MCF 10A (cell line): ENCODE measurements at regions of chr5 and their contacts with region 1.

Region 1: DNA sequence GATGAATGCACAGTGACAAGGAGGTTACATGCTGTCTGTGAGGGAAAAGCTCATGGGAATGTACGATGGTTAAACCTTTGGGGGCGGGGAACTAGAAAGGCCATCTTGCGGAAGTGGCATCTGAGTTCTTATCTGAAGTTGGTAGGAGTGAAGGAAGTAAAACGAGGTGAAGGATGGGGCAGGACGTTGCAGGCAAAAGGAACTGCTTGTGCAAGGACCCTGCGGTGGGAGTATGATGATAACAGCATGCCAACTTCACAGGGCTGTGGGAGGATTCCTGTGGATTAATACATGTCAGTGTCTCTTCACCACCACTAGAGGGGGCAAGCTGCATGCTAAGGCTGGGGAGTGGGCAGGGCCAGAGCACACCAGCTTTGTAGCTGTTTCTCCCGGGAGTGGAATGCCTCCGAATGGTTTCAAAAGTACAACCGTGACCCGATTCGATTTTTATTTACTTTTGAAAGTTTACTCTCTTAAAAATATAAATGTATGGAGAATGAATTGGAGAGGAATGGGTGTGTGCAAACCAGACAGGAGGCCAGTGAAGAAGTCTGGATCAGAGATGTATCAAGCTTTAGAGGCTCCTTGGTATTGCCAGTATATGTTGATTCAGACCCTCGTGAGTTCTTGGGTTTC is 62.5 kb downstream of the CYFIP2 start:
- DNase-seq: peak; percentile 90
- H3K4me3 Mint-ChIP-seq: no peak overlapping the region
- H3K27ac Mint-ChIP-seq: no peak overlapping the region
- H3K4me1 Mint-ChIP-seq: no peaks in the 10 kb centered on the region
- H3K27me3 Mint-ChIP-seq: no peaks in the 10 kb centered on the region
- CTCF ChIP-seq: peak; percentile 97

Region 2: DNA sequence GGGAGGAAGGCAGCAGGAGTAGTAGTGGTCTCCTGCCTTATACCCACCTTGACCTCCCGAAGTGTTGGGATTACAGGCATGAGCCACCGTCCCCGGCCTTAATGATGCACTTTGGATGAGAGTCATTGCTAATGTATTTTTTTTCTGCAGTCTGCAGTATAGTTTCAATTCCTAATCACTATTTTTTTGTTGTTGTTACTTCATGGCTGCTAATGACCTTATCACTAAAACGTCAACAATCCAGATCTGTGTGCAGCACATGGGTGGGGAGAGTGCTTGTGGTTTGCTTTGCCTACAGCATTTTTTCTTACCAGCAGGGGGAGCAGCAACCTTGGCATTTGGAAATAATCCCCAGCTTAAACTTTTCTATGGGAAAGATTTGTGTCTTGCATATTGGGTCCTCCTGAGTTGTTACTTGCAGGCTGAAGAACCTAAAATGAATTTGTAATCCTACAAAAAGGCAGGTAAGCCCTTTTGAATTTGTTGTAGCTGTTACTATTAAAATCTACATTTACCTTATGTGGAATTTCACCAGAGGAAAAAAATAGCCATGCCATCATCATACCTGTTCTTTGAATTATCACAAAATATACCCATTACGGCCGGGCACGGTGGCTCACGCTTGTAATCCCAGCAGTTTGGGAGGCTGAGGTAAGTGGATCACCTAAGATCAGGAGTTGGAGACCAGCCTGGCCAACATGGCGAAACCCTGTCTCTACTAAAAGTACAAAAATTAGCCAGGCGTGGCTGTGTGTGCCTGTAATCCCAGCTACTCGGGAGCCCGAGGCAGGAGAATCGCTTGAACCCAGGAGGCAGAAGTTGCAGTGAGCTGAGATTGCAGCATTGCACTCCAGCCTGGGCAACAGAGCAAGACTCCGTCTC is 179.4 kb before region 1 on chr5:
- CTCF ChIA-PET with region 1: interaction called, 12 read pairs
- POLR2A ChIA-PET with region 1: no interaction called
- intact Hi-C with region 1: no loop called
- DNase-seq: peak; percentile 81
- H3K4me3 Mint-ChIP-seq: no peak overlapping the region
- H3K27ac Mint-ChIP-seq: no peak overlapping the region
- H3K4me1 Mint-ChIP-seq: peaks cover 6% of the 10 kb centered on the region
- H3K27me3 Mint-ChIP-seq: no peaks in the 10 kb centered on the region
- CTCF ChIP-seq: peak; percentile 90

Region 3: GRCh38 chr5:157225469-157226422 is 102.6 kb before region 1 on chr5:
- CTCF ChIA-PET with region 1: no interaction called
- POLR2A ChIA-PET with region 1: no interaction called
- intact Hi-C with region 1: no loop called
- DNase-seq: no peak
- H3K4me3 Mint-ChIP-seq: no peak overlapping the region
- H3K27ac Mint-ChIP-seq: no peak overlapping the region
- H3K4me1 Mint-ChIP-seq: no peaks in the 10 kb centered on the region
- H3K27me3 Mint-ChIP-seq: no peaks in the 10 kb centered on the region
- CTCF ChIP-seq: no peak

Region 4: GRCh38 chr5:157253547-157253946 is 74.8 kb before region 1 on chr5:
- CTCF ChIA-PET with region 1: interaction called, 57 read pairs
- POLR2A ChIA-PET with region 1: interaction called, 3 read pairs
- intact Hi-C with region 1: no loop called
- DNase-seq: peak; percentile 79
- H3K4me3 Mint-ChIP-seq: no peak overlapping the region
- H3K27ac Mint-ChIP-seq: no peak overlapping the region
- H3K4me1 Mint-ChIP-seq: no peaks in the 10 kb centered on the region
- H3K27me3 Mint-ChIP-seq: no peaks in the 10 kb centered on the region
- CTCF ChIP-seq: peak; percentile 96

Region 5: GRCh38 chr5:157312492-157312891 is 15.9 kb before region 1 on chr5:
- CTCF ChIA-PET with region 1: interaction called, 97 read pairs
- POLR2A ChIA-PET with region 1: interaction called, 3 read pairs
- intact Hi-C with region 1: no loop called
- DNase-seq: peak; percentile 67
- H3K4me3 Mint-ChIP-seq: no peak overlapping the region
- H3K27ac Mint-ChIP-seq: no peak overlapping the region
- H3K4me1 Mint-ChIP-seq: no peaks in the 10 kb centered on the region
- H3K27me3 Mint-ChIP-seq: no peaks in the 10 kb centered on the region
- CTCF ChIP-seq: peak; percentile 82

Region 6: DNA sequence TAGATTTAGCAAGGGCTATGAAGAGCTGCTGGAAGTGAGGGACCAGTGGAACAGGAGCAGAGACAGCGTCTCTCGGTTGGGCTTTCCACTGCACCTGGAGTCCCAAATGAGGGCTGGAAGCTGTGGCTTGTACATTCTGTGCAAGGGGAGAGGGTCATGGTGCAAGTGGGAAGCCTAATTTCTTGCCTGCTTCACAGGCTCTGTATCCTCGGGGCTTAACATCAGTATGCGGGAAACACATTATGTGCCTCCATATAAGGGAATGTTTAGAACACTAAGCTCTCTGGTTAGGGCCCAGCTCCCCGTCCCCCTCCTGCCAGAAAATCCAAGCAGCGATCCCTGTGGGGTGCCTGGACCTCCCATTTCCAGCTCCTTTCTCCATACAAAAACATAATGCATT is 42.6 kb after region 1 on chr5:
- CTCF ChIA-PET with region 1: interaction called, 11 read pairs
- POLR2A ChIA-PET with region 1: no interaction called
- intact Hi-C with region 1: no loop called
- DNase-seq: no peak
- H3K4me3 Mint-ChIP-seq: no peak overlapping the region
- H3K27ac Mint-ChIP-seq: no peak overlapping the region
- H3K4me1 Mint-ChIP-seq: no peaks in the 10 kb centered on the region
- H3K27me3 Mint-ChIP-seq: no peaks in the 10 kb centered on the region
- CTCF ChIP-seq: no peak

Region 7: GRCh38 chr5:157476702-157477408 is 148.5 kb after region 1 on chr5:
- CTCF ChIA-PET with region 1: interaction called, 178 read pairs
- POLR2A ChIA-PET with region 1: interaction called, 4 read pairs
- intact Hi-C with region 1: loop called (anchors 1 kb)
- DNase-seq: peak; percentile 93
- H3K4me3 Mint-ChIP-seq: no peak overlapping the region
- H3K27ac Mint-ChIP-seq: no peak overlapping the region
- H3K4me1 Mint-ChIP-seq: no peaks in the 10 kb centered on the region
- H3K27me3 Mint-ChIP-seq: no peaks in the 10 kb centered on the region
- CTCF ChIP-seq: peak; percentile 97

Region 8: GRCh38 chr5:157731272-157732129 is 403.1 kb after region 1 on chr5 and contains the start of gene THG1L:
- CTCF ChIA-PET with region 1: interaction called, 7 read pairs
- POLR2A ChIA-PET with region 1: no interaction called
- intact Hi-C with region 1: loop called (anchors 1 kb)
- DNase-seq: peak; percentile 100
- H3K4me3 Mint-ChIP-seq: peak within 1 kb of the TSS; percentile 97
- H3K27ac Mint-ChIP-seq: peak within 1 kb of the TSS; percentile 98
- H3K4me1 Mint-ChIP-seq: peaks cover 14% of the 10 kb centered on the region
- H3K27me3 Mint-ChIP-seq: no peaks in the 10 kb centered on the region
- CTCF ChIP-seq: no peak
- total RNA-seq, gene THG1L: 21.1 and 29.9 TPM in 2 replicates